Lower leg skin (tissue), 4 donors: ENCODE measurements at regions of chr19 and their contacts with region 1.

Region 1: DNA sequence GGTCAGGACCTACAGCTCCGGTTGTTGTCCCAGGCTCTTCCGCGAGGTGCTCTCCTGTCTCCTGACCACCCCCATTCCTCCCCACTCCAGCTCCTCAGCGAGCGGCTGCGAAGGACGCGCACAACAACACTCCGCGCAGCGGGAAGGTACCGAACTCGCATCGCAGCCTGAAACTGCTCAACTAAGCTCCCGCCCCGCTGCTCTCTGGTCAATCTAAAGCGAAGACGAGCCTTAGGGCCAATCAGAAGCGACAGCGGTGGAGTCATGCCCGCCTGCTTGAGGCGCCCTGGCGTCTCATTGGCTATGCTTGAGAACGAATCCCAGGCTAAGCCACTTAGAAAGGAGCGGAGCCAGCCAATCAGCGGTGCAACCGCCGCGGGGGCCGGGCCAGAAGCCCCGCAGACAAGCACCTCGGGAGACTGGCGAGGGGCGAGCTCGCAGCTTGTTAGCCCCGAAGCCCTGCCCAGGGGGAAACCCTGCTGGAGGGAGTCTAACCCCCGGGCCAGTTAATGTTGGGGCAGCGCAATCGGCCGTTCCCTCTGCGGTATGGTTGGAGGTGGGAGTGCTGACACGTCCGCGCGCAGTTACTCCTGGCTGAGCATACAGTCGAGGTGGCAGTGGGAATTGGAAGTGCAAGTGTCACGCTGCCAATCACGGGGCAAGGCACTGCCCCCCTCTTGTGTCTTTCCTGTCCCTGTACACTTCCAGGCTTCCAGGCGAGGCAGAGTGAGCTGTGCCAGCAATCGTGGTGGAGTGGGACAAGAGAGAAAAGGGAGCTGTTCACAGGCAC is 1.9 kb upstream of the ZBTB32 start:
- DNase-seq: peak; percentile 97 to 99
- H3K4me3 ChIP-seq: peak overlapping the region; percentile 33
- CTCF ChIP-seq: peak in 1 of 3 donors; percentile 12
- POLR2A ChIP-seq: no peak

Region 2: GRCh38 chr19:34082289-34083077 is 1619.9 kb before region 1 on chr19:
- intact Hi-C with region 1: no loop called
- DNase-seq: no peak
- H3K4me3 ChIP-seq: no peak overlapping the region
- CTCF ChIP-seq: no peak
- POLR2A ChIP-seq: no peak

Region 3: DNA sequence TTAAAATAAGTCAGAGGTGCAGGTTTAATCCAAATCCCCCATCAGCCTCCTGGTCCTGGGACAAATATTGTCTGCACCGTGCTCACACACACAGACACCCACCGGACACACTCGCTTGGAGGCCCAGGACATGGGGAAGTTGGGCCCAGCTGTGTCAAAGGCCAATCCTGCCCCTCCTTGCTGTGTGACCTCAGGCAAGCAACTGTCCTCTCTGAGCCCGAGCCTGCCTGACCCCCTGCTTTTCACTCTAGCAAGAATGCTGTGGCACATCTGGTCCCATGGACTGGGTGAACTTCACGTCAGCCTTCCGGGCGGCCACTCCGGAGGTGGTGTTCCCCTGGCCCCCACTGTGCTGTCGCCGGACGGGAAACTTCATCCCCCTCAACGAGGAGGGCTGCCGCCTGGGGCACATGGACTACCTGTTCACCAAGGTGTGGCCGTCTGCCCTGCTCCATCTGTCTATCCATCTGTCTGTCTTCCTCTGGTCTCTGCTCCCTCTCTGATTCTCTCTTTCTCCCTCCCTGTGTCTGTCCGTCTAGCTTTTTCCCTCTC is 26.8 kb before region 1 on chr19:
- intact Hi-C with region 1: loop called (anchors 1 kb)
- DNase-seq: no peak
- H3K4me3 ChIP-seq: no peak overlapping the region
- CTCF ChIP-seq: no peak
- POLR2A ChIP-seq: no peak

Region 4: DNA sequence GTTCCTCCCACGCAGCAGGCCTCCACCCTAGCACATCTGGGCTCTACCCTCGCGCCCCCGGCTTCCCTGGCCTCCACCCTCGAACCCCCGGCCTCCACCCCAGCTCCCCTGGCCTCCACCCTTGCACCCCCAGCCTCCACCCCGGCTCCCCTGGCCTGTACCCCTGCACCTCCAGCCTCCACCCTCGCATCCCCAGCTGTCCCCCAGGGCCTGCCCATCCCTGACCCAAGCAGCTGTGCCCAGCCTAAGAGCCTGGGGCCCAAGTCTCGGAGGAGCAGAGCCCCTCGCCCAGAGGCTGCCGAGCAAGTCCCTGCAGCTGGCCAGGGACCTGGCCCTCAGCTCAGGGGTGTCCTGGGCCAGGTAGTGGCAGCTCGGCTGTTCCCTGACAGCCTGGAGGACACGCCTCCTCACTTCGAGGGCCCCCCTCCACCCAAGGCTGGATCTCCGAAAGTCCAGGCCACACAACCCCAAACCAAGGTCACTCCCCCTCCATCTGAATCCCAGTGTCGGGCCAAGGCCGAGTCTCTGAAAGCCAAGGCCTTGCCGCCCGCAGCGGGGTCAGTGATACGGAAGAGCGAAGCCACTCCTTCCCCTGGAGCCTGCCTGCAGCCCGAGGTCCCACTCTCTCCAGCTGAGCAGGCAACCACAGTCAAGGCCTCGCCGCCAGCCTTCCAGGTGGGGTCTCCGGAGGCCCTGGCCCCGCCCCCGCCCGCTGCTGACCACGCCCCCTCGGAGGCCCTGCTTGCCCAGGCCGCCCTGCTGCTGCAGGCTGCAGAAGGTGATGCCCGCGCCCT is 65.1 kb after region 1 on chr19:
- intact Hi-C with region 1: no loop called
- DNase-seq: no peak
- H3K4me3 ChIP-seq: no peak overlapping the region
- CTCF ChIP-seq: no peak
- POLR2A ChIP-seq: no peak